CD4-positive, alpha-beta memory T cell (primary cell): ENCODE measurements at regions of chr12 and their contacts with region 1.

Region 1: DNA sequence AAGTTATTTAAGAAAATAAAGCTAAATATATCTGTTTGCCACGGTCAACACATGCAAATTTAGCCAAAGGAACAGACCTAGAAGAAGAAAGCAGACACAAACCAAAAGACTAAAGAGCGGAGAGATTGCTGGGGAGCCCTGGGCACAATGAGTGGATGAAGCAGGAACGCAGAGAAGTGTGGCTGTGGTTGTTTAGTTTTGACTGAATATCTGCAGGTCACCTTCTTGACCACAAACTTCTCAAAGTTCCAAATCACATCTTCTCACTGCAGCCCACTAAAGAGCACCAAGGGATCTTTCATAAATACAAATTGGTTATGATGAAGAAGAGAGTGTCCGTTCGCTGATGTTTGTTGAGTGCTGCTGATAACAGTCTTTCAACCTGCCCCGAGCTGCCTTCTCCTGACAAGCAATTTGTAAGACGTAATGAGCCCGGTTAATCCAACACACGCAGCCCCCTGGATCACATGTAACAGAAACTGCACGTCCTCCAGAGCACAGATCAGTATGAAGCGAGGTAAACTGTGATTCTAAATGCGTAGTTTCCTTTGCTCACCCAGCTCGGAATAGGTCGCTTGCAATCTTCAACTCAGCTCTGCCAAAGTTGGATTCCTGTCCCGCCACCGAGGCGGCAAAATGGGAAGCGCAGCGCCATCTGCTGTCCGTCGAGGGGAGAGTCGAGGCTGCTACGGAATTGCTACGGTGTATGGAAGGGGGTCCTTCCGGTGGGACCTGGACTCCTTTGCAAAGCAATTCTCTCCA is 120.8 kb downstream of the GXYLT1 start:
- DNase-seq: peak; percentile 44 to 58 (median 54)
- H3K4me3 ChIP-seq: peak overlapping the region; percentile 14 to 66
- H3K4me3 Mint-ChIP-seq: peak overlapping the region; percentile 41 to 88 (median 74)
- H3K27ac ChIP-seq: no peak overlapping the region
- H3K27ac Mint-ChIP-seq: peak overlapping the region in 3 of 7 donors; percentile 3 to 65 (median 4)
- H3K4me1 ChIP-seq: peaks cover 10% of the 10 kb centered on the region
- H3K4me1 Mint-ChIP-seq: peaks cover 7 to 12% (median 9%) of the 10 kb centered on the region in 4 donors
- H3K27me3 ChIP-seq: no peaks in the 10 kb centered on the region
- H3K27me3 Mint-ChIP-seq: peaks cover 3 to 6% of the 10 kb centered on the region in 2 donors

Region 2: GRCh38 chr12:40946612-40947194 is 1077.2 kb before region 1 on chr12:
- CTCF ChIA-PET with region 1: interaction called, 18 read pairs
- POLR2A ChIA-PET with region 1: no interaction called
- intact Hi-C with region 1: no loop called
- DNase-seq: peak in 3 of 5 donors; percentile 11 to 12 (median 11)
- H3K4me3 ChIP-seq: no peak overlapping the region
- H3K4me3 Mint-ChIP-seq: no peak overlapping the region
- H3K27ac ChIP-seq: no peak overlapping the region
- H3K27ac Mint-ChIP-seq: no peak overlapping the region
- H3K4me1 ChIP-seq: no peaks in the 10 kb centered on the region
- H3K4me1 Mint-ChIP-seq: no peaks in the 10 kb centered on the region
- H3K27me3 ChIP-seq: no peaks in the 10 kb centered on the region
- H3K27me3 Mint-ChIP-seq: peaks cover 0 to 2% of the 10 kb centered on the region in 2 donors

Region 3: DNA sequence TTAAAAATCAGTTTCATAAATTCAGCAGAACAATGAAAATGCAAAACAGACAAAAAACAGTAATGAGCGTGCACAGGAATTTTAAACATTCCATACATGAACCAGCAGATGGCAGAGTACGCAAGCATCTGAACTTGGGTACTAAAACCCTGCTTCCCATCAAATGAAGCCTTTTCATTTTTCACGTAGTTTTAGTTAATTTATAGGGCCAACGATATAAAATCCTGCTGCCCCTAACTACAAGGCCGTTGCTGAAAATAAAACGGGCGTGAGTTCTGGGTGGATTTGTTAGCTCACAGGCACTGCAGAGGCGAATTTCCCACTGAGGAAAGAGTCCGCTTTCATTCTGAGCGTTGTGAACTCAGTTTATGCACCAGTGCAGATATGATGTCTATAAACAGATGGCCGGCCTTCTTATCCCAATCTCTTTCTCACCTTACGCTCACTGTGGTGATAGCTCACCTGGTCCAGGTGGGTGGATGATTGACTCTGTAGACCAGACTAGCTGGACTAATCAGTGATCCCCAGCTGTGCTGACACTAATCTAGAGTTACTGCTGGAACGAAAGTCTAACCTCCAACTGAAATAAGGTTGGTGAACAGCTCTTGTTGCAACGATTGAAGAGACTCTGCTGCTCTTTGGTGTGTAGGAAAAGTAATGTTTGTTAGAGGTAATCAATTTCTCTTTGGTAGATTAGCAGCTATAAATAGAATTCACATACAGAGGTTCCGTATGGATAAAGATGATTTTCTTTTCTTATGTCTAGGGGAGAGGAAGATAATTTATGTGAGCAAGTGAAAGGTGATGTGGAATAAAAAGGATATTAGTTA is 746.6 kb before region 1 on chr12:
- CTCF ChIA-PET with region 1: interaction called, 12 read pairs
- POLR2A ChIA-PET with region 1: no interaction called
- intact Hi-C with region 1: loop called (anchors 2 kb)
- DNase-seq: peak; percentile 2 to 16 (median 6)
- H3K4me3 ChIP-seq: no peak overlapping the region
- H3K4me3 Mint-ChIP-seq: no peak overlapping the region
- H3K27ac ChIP-seq: no peak overlapping the region
- H3K27ac Mint-ChIP-seq: no peak overlapping the region
- H3K4me1 ChIP-seq: no peaks in the 10 kb centered on the region
- H3K4me1 Mint-ChIP-seq: no peaks in the 10 kb centered on the region
- H3K27me3 ChIP-seq: no peaks in the 10 kb centered on the region
- H3K27me3 Mint-ChIP-seq: peaks cover 3 to 7% of the 10 kb centered on the region in 2 donors

Region 4: GRCh38 chr12:41653386-41654326 is 370.3 kb before region 1 on chr12:
- CTCF ChIA-PET with region 1: no interaction called
- POLR2A ChIA-PET with region 1: no interaction called
- intact Hi-C with region 1: no loop called
- DNase-seq: no peak
- H3K4me3 ChIP-seq: no peak overlapping the region
- H3K4me3 Mint-ChIP-seq: no peak overlapping the region
- H3K27ac ChIP-seq: no peak overlapping the region
- H3K27ac Mint-ChIP-seq: no peak overlapping the region
- H3K4me1 ChIP-seq: no peaks in the 10 kb centered on the region
- H3K4me1 Mint-ChIP-seq: peaks cover 0 to 3% (median 0%) of the 10 kb centered on the region in 4 donors
- H3K27me3 ChIP-seq: no peaks in the 10 kb centered on the region
- H3K27me3 Mint-ChIP-seq: no peaks in the 10 kb centered on the region

Region 5: DNA sequence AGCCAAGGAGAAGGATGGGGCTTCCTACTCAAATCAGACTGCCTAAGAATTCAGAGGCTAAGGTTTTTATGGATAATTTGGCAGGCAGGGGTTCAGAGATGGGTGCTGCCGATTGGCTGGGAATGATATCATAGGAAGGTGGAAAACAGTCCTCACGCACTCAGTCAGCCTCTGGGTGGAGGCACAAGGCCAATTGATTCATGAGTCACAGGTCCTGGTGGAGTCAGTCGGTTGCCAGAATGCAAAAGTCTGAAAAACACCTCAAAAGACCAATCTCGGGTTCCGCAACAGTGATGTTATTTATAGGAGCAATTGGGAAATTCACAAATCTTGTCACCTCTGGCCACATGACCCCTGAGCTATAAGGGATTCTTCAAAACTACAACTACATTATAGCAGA is 15.3 kb after region 1 on chr12:
- CTCF ChIA-PET with region 1: interaction called, 25 read pairs
- POLR2A ChIA-PET with region 1: no interaction called
- intact Hi-C with region 1: no loop called
- DNase-seq: no peak
- H3K4me3 ChIP-seq: no peak overlapping the region
- H3K4me3 Mint-ChIP-seq: no peak overlapping the region
- H3K27ac ChIP-seq: no peak overlapping the region
- H3K27ac Mint-ChIP-seq: no peak overlapping the region
- H3K4me1 ChIP-seq: no peaks in the 10 kb centered on the region
- H3K4me1 Mint-ChIP-seq: no peaks in the 10 kb centered on the region
- H3K27me3 ChIP-seq: no peaks in the 10 kb centered on the region
- H3K27me3 Mint-ChIP-seq: peaks cover 7 to 9% of the 10 kb centered on the region in 2 donors

Region 6: GRCh38 chr12:42190376-42190775 is 166.5 kb after region 1 on chr12:
- CTCF ChIA-PET with region 1: no interaction called
- POLR2A ChIA-PET with region 1: no interaction called
- intact Hi-C with region 1: no loop called
- DNase-seq: no peak
- H3K4me3 ChIP-seq: no peak overlapping the region
- H3K4me3 Mint-ChIP-seq: no peak overlapping the region
- H3K27ac ChIP-seq: no peak overlapping the region
- H3K27ac Mint-ChIP-seq: no peak overlapping the region
- H3K4me1 ChIP-seq: no peaks in the 10 kb centered on the region
- H3K4me1 Mint-ChIP-seq: peaks cover 0 to 8% (median 2%) of the 10 kb centered on the region in 4 donors
- H3K27me3 ChIP-seq: no peaks in the 10 kb centered on the region
- H3K27me3 Mint-ChIP-seq: no peaks in the 10 kb centered on the region

Region 7: DNA sequence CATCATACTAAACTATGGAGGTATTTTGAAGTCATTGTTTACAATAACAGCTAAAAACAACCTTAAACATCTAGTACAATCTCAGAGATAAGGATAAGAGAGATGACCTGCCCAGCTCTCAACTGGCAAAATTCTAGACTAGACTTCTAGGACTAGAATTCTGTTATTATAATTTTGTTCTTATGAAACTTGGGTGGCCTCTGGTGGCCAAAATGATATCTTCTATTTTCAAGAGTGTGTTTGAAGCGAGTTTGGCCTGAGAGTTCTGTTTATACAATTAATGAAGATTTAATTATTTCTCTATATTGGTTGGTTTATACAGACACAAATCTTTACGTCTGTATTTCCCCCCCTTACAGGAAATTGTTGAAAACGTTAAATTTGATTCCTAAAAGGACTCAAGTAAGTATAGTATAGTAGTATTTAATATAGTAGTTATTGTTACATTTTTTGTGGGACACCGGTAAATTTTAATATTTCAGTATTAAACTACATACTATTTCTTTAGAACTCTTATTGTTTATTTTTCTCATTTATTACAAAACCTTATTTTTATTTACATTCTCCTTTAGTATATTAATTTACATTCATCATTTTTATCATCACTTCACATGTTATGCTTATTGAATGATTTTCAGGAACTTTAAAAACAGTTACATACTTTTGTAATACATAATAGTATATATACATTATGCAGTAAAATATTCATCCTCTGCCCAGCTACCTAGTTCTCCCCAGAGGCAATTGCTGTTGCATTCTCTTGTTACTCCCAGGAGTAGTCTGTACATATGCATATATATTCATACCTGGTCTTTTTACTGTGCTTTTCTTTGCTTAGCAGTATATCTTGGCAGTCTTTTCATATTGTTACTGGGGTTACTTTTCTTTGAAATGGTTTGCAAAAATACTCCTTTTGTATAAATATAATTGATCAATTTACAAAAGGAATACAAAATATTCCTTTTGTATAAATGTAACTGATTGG is 308.7 kb after region 1 on chr12:
- CTCF ChIA-PET with region 1: interaction called, 8 read pairs
- POLR2A ChIA-PET with region 1: no interaction called
- intact Hi-C with region 1: loop called (anchors 2 kb)
- DNase-seq: peak in 4 of 5 donors; percentile 33 to 47 (median 44)
- H3K4me3 ChIP-seq: no peak overlapping the region
- H3K4me3 Mint-ChIP-seq: no peak overlapping the region
- H3K27ac ChIP-seq: peak overlapping the region; percentile 16
- H3K27ac Mint-ChIP-seq: peak overlapping the region in 3 of 7 donors; percentile 17 to 50 (median 35)
- H3K4me1 ChIP-seq: peaks cover 60% of the 10 kb centered on the region
- H3K4me1 Mint-ChIP-seq: peaks cover 43 to 68% (median 53%) of the 10 kb centered on the region in 4 donors
- H3K27me3 ChIP-seq: no peaks in the 10 kb centered on the region
- H3K27me3 Mint-ChIP-seq: no peaks in the 10 kb centered on the region